MCF 10A (cell line): ENCODE measurements at regions of chr20 and their contacts with region 1.

Region 1: DNA sequence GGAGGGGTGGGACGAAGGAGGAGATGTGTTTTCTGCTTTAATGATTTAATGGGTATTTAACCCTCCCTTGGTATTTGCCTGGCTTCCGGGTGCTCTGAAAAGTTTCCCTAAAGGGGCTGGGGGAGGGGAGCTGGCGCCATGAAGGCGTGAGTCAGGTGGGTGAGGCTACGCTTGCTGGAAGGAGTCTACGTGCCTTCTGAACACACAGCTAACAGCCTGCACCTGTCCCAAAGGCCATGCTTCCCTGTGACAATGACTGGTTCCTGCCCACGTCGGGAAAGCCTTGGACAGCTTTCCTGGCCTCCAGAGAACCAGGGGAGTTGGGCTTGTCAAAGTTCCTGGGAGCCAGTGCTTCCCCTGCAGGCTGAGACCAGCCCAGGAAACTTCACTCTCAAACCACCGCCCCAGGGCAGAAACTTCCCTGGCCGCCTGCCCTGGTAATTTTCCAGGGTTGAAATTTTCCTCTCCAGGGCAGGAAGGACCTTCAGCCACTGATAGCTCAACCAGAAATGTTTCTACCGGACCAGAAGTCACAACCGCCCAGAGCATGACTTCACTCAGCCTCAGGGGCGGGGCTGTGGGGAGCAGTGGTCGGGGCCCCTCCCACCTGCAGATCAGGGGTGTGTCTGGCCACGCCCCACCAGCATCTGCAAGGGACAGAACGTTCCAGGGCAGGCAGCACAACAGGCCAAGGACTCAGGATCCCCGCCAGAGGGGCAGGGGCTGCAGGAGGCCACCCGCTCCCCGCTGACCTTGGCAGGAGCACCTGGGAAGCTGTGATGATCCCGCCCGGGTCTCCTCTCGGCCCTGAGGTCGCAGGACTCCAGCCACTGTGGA is 18.6 kb upstream of the SLCO4A1 start:
- DNase-seq: peak; percentile 97
- H3K4me3 Mint-ChIP-seq: peak overlapping the region; percentile 44
- H3K27ac Mint-ChIP-seq: peak overlapping the region; percentile 93
- H3K4me1 Mint-ChIP-seq: peaks cover 19% of the 10 kb centered on the region
- H3K27me3 Mint-ChIP-seq: no peaks in the 10 kb centered on the region
- CTCF ChIP-seq: no peak

Region 2: GRCh38 chr20:62302341-62303058 is 321.2 kb before region 1 on chr20 and contains the start of gene ADRM1:
- CTCF ChIA-PET with region 1: no interaction called
- POLR2A ChIA-PET with region 1: no interaction called
- intact Hi-C with region 1: loop called (anchors 5 kb)
- DNase-seq: peak; percentile 95
- H3K4me3 Mint-ChIP-seq: peak within 1 kb of the TSS; percentile 90
- H3K27ac Mint-ChIP-seq: peak within 1 kb of the TSS; percentile 95
- H3K4me1 Mint-ChIP-seq: peaks cover 18% of the 10 kb centered on the region
- H3K27me3 Mint-ChIP-seq: no peaks in the 10 kb centered on the region
- CTCF ChIP-seq: peak; percentile 95
- total RNA-seq, gene ADRM1: 98.0 and 127 TPM in 2 replicates

Region 3: GRCh38 chr20:62595491-62595890 is 28.2 kb before region 1 on chr20:
- CTCF ChIA-PET with region 1: no interaction called
- POLR2A ChIA-PET with region 1: interaction called, 19 read pairs
- intact Hi-C with region 1: no loop called
- DNase-seq: peak; percentile 72
- H3K4me3 Mint-ChIP-seq: no peak overlapping the region
- H3K27ac Mint-ChIP-seq: no peak overlapping the region
- H3K4me1 Mint-ChIP-seq: peaks cover 34% of the 10 kb centered on the region
- H3K27me3 Mint-ChIP-seq: no peaks in the 10 kb centered on the region
- CTCF ChIP-seq: no peak

Region 4: GRCh38 chr20:62611819-62612218 is 11.9 kb before region 1 on chr20:
- CTCF ChIA-PET with region 1: interaction called, 5 read pairs
- POLR2A ChIA-PET with region 1: interaction called, 11 read pairs
- intact Hi-C with region 1: no loop called
- DNase-seq: no peak
- H3K4me3 Mint-ChIP-seq: no peak overlapping the region
- H3K27ac Mint-ChIP-seq: no peak overlapping the region
- H3K4me1 Mint-ChIP-seq: no peaks in the 10 kb centered on the region
- H3K27me3 Mint-ChIP-seq: peaks cover 11% of the 10 kb centered on the region
- CTCF ChIP-seq: no peak

Region 5: DNA sequence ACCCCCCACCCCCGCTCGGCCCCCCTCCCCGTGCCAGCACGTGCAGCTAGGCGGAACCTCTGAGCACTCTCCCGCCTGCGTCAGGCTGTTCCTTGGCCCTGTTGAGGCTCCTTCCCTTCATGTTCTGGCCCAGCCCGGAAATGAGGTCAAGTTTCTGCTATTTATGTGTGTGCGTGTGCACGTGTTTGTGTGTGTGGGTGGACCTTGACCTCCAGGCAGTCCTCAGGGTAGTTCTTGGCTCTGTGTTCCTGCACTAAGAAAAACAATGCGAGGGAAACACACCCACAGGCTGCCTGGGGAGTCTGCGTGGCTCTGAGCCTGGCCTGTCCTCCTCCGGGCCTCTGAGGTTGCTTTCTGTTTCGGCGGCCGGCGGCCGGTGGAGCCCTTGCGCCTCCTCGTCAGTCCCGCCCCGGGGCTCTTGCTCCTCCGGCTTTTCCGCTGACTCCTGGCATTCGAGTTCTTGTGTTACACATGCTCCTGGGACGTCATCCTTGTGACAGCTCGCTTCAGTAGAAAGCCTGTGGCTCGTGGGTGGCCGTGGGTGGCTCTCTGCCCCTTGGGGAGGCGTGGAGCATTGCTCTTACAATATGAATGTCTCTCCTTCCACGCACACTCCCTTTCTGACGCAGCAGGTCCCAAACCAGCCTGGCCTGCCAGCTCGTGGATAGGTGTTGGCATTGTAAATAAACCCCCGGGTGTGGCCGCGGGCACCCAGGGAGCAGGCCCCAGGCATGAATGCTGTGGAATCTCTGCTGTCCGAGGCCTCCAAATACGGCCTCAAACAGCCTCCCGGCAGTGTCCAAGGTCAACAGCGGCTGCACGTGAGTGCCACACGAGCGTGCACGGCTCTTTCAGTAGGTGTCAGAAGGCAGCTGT is 28.6 kb after region 1 on chr20:
- CTCF ChIA-PET with region 1: interaction called, 10 read pairs
- POLR2A ChIA-PET with region 1: interaction called, 40 read pairs
- intact Hi-C with region 1: no loop called
- DNase-seq: peak; percentile 99
- H3K4me3 Mint-ChIP-seq: peak overlapping the region; percentile 72
- H3K27ac Mint-ChIP-seq: peak overlapping the region; percentile 98
- H3K4me1 Mint-ChIP-seq: peaks cover 11% of the 10 kb centered on the region
- H3K27me3 Mint-ChIP-seq: no peaks in the 10 kb centered on the region
- CTCF ChIP-seq: no peak

Region 6: GRCh38 chr20:62697468-62697912 is 73.8 kb after region 1 on chr20:
- CTCF ChIA-PET with region 1: no interaction called
- POLR2A ChIA-PET with region 1: no interaction called
- intact Hi-C with region 1: no loop called
- DNase-seq: no peak
- H3K4me3 Mint-ChIP-seq: no peak overlapping the region
- H3K27ac Mint-ChIP-seq: no peak overlapping the region
- H3K4me1 Mint-ChIP-seq: no peaks in the 10 kb centered on the region
- H3K27me3 Mint-ChIP-seq: peaks cover 27% of the 10 kb centered on the region
- CTCF ChIP-seq: no peak

Region 7: DNA sequence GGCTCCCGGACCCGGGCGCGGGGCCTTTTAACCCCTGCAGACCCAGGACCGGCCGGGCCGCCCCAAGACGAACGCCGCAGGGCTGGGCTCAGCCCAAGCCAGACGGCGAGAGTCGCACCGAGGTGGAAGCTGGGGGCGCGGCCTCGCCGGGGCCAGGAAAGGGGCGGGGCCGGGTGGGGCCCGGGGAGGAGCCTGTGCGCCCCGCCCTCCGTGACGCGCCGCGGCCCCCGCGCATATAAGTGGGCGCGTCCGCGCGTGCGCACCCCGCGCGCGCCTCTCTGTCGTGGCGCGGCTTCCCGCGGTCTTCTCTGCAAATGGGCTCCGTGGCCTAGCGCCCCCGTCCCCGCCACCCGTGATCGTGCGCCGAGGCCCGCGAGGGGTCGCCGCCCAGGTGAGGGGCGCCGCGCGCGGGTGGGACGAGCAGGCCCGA is 896.8 kb after region 1 on chr20 and contains the start of gene PPDPF:
- CTCF ChIA-PET with region 1: no interaction called
- POLR2A ChIA-PET with region 1: no interaction called
- intact Hi-C with region 1: no loop called
- DNase-seq: peak; percentile 75
- H3K4me3 Mint-ChIP-seq: peak within 1 kb of the TSS; percentile 83
- H3K27ac Mint-ChIP-seq: peak within 1 kb of the TSS; percentile 42
- H3K4me1 Mint-ChIP-seq: no peaks in the 10 kb centered on the region
- H3K27me3 Mint-ChIP-seq: no peaks in the 10 kb centered on the region
- CTCF ChIP-seq: no peak
- total RNA-seq, gene PPDPF: 315 and 355 TPM in 2 replicates